ENCODE measurements at regions of chr2 and their contacts with region 1.

Region 1: GRCh38 chr2:85551698-85552678 is 9.3 kb downstream of the GGCX start:
- H3K4me3 Mint-ChIP-seq: no peak overlapping the region
- H3K27ac Mint-ChIP-seq: no peak overlapping the region
- H3K4me1 Mint-ChIP-seq: peaks cover 45% of the 10 kb centered on the region
- H3K27me3 Mint-ChIP-seq: no peaks in the 10 kb centered on the region

Region 2: GRCh38 chr2:85390941-85391669 is 160.9 kb before region 1 on chr2:
- intact Hi-C with region 1: loop called (anchors 2 kb)
- H3K4me3 Mint-ChIP-seq: no peak overlapping the region
- H3K27ac Mint-ChIP-seq: no peak overlapping the region
- H3K4me1 Mint-ChIP-seq: peaks cover 30% of the 10 kb centered on the region
- H3K27me3 Mint-ChIP-seq: no peaks in the 10 kb centered on the region

Region 3: GRCh38 chr2:85420536-85421259 is 131.3 kb before region 1 on chr2:
- intact Hi-C with region 1: loop called (anchors 1 kb)
- H3K4me3 Mint-ChIP-seq: peak overlapping the region; percentile 32
- H3K27ac Mint-ChIP-seq: peak overlapping the region; percentile 85
- H3K4me1 Mint-ChIP-seq: peaks cover 69% of the 10 kb centered on the region
- H3K27me3 Mint-ChIP-seq: no peaks in the 10 kb centered on the region

Region 4: GRCh38 chr2:85504778-85505323 is 47.1 kb before region 1 on chr2:
- intact Hi-C with region 1: no loop called
- H3K4me3 Mint-ChIP-seq: no peak overlapping the region
- H3K27ac Mint-ChIP-seq: peak overlapping the region; percentile 86
- H3K4me1 Mint-ChIP-seq: peaks cover 89% of the 10 kb centered on the region
- H3K27me3 Mint-ChIP-seq: no peaks in the 10 kb centered on the region

Measured in dendritic cell treated with granulocyte-macrophage colony-stimulating factor and Interleukin-4, amounts not matched to agents 40 ng/mL and 50 ng/mL, for 4 days (primary cell).